ENCODE measurements at regions of chr1 and their contacts with region 1.

Region 1: GRCh38 chr1:10430216-10431069 is at the start of gene CENPS:
- DNase-seq: peak; percentile 95
- ATAC-seq: peak; percentile 90
- H3K4me3 Mint-ChIP-seq: peak within 1 kb of the TSS; percentile 88
- H3K27ac Mint-ChIP-seq: peak within 1 kb of the TSS; percentile 94
- H3K4me1 Mint-ChIP-seq: peaks cover 16% of the 10 kb centered on the region
- H3K27me3 Mint-ChIP-seq: no peaks in the 10 kb centered on the region
- CTCF ChIP-seq: peak; percentile 98
- total RNA-seq, gene CENPS: 18.3 to 19.4 TPM

Region 2: GRCh38 chr1:10378081-10378841 is 52.2 kb before region 1 on chr1:
- CTCF ChIA-PET with region 1: interaction called, 5 read pairs
- POLR2A ChIA-PET with region 1: no interaction called
- intact Hi-C with region 1: loop called (anchors 10 kb)
- DNase-seq: no peak
- ATAC-seq: no peak
- H3K4me3 Mint-ChIP-seq: no peak overlapping the region
- H3K27ac Mint-ChIP-seq: no peak overlapping the region
- H3K4me1 Mint-ChIP-seq: no peaks in the 10 kb centered on the region
- H3K27me3 Mint-ChIP-seq: no peaks in the 10 kb centered on the region
- CTCF ChIP-seq: no peak

Measured in activated CD8-positive, alpha-beta T cell treated with anti-CD3 and anti-CD28 coated beads for 36 hours (primary cell).